Panc1 (cell line): ENCODE measurements at regions of chr6 and their contacts with region 1.

Region 1: GRCh38 chr6:123316733-123317323 is 319.9 kb downstream of the TRDN start:
- DNase-seq: peak; percentile 20
- ATAC-seq: no peak
- H3K4me3 ChIP-seq: no peak overlapping the region
- H3K27ac ChIP-seq: no peak overlapping the region
- H3K4me1 ChIP-seq: no peaks in the 10 kb centered on the region; the same call in 1 of the 2 replicates
- H3K27me3 ChIP-seq: no peaks in the 10 kb centered on the region
- CTCF ChIP-seq: no peak; the same call in 1 of the 2 replicates

Region 2: DNA sequence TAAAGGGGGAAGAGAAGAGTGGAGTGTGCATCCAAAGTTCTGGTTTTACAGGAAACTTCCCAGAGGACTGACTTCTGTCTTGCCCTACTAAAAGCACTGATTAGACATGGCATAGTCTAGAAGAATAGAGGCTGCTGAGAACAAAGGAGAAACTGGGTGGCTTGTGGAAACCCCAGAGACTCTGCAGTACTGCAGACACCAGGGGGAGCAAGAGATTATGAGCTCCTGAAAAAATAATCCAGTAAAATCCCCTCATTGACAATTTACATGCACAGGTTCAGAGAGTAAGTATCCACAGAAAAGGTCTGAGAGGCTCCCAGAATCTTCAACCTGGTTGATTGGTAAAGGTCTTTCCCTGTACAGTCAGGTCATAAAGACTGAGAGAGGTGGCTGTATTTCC is 369.5 kb before region 1 on chr6:
- CTCF ChIA-PET with region 1: no interaction called
- POLR2A ChIA-PET with region 1: no interaction called
- in situ Hi-C with region 1: no loop called
- intact Hi-C with region 1: loop called (anchors 5 kb)
- DNase-seq: no peak
- ATAC-seq: no peak
- H3K4me3 ChIP-seq: no peak overlapping the region
- H3K27ac ChIP-seq: no peak overlapping the region
- H3K4me1 ChIP-seq: no peaks in the 10 kb centered on the region
- H3K27me3 ChIP-seq: no peaks in the 10 kb centered on the region
- CTCF ChIP-seq: peak; percentile 64